Transverse colon (tissue), 4 donors: ENCODE measurements at regions of chr1 and their contacts with region 1.

Region 1: GRCh38 chr1:114979278-114979891 is 50.2 kb upstream of the TSHB start:
- DNase-seq: peak; percentile 64
- H3K4me3 ChIP-seq: no peak overlapping the region
- H3K27ac ChIP-seq: no peak overlapping the region
- H3K4me1 ChIP-seq: no peaks in the 10 kb centered on the region
- H3K27me3 ChIP-seq: peaks cover 5% of the 10 kb centered on the region
- CTCF ChIP-seq: peak; percentile 76 to 86 (median 78)
- EP300 ChIP-seq: no peak
- POLR2A ChIP-seq: no peak

Region 2: GRCh38 chr1:114868766-114869165 is 110.6 kb before region 1 on chr1:
- in situ Hi-C with region 1: no loop called
- intact Hi-C with region 1: no loop called
- DNase-seq: no peak
- H3K4me3 ChIP-seq: no peak overlapping the region
- H3K27ac ChIP-seq: no peak overlapping the region
- H3K4me1 ChIP-seq: no peaks in the 10 kb centered on the region
- H3K27me3 ChIP-seq: no peaks in the 10 kb centered on the region
- CTCF ChIP-seq: no peak
- EP300 ChIP-seq: no peak
- POLR2A ChIP-seq: no peak

Region 3: DNA sequence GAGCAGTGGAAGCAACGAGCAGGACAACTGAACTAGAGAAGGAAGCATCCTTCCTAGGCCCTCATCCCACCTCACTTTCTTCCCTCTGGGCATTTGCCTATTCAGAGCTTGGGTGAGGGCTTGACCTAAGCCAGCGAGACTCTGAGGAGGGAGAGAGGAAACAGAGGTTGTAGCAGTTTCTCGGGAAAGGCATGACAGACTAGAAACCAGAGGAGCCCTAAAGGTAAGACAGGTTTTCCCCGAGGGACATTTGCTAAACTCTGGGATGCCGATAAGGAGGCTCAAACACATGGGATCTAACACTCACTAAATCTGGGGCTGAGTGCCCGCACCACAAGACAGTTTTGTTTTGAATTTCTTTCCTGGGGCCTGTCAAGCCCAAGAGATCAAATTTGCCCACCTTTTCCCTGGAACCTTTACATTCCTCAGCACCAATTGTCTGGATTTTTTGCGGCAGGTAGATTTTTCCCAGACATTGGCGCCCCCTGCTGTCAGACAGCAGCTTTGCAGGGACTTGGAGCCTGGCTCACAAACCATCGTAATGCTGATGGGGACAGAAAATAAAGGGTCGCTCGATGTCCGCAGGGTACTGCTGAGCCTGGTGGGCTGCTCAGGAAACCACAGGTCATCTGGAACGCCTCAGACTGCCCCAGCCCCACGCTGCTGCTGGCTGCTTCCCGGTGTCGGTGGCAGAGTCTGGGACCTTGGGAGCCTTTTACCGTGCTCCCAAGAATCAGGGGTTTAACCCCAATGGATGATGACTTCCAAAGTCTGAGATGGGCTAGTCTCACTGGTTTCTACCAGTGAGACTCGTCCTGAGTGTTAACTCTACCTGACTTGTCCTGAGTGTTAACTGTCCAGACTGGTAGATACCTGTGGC is 133.4 kb after region 1 on chr1:
- in situ Hi-C with region 1: loop called (anchors 5 kb)
- intact Hi-C with region 1: loop called (anchors 2 kb)
- DNase-seq: peak; percentile 38
- H3K4me3 ChIP-seq: no peak overlapping the region
- H3K27ac ChIP-seq: no peak overlapping the region
- H3K4me1 ChIP-seq: peaks cover 0 to 9% (median 0%) of the 10 kb centered on the region in 4 donors
- H3K27me3 ChIP-seq: no peaks in the 10 kb centered on the region
- CTCF ChIP-seq: peak; percentile 87 to 96 (median 95)
- EP300 ChIP-seq: no peak
- POLR2A ChIP-seq: no peak

Region 4: DNA sequence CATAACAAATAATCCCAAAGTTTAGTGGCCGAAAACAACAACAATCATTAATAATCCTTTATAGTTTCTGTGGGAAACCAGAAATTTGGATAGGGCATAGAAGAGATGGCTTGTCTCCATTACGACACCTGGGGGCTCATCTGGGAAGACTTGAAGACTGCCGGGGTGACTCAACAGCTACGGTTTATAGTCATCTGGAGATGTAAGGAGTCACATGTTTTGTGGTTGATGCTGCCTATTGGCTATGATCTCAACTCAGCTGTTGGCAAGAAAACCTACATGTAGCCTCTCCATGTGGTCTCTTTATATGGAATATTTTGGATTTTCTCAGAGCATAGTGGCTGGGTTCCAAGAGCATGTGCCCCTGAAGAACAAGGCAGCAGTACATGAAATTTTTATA is 139.2 kb after region 1 on chr1:
- in situ Hi-C with region 1: loop called (anchors 5 kb)
- intact Hi-C with region 1: loop called (anchors 2 kb)
- DNase-seq: no peak
- H3K4me3 ChIP-seq: no peak overlapping the region
- H3K27ac ChIP-seq: no peak overlapping the region
- H3K4me1 ChIP-seq: no peaks in the 10 kb centered on the region
- H3K27me3 ChIP-seq: no peaks in the 10 kb centered on the region
- CTCF ChIP-seq: no peak
- EP300 ChIP-seq: no peak
- POLR2A ChIP-seq: no peak

Region 5: GRCh38 chr1:115595279-115596079 is 616.1 kb after region 1 on chr1:
- in situ Hi-C with region 1: loop called in 2 of 4 experiments (anchors 25 kb)
- intact Hi-C with region 1: loop called (anchors 10 kb)
- DNase-seq: peak; percentile 79
- H3K4me3 ChIP-seq: no peak overlapping the region
- H3K27ac ChIP-seq: no peak overlapping the region
- H3K4me1 ChIP-seq: no peaks in the 10 kb centered on the region
- H3K27me3 ChIP-seq: no peaks in the 10 kb centered on the region
- CTCF ChIP-seq: peak; percentile 80 to 87 (median 84)
- EP300 ChIP-seq: no peak
- POLR2A ChIP-seq: no peak